ENCODE measurements at regions of chr9 and their contacts with region 1.

Region 1: DNA sequence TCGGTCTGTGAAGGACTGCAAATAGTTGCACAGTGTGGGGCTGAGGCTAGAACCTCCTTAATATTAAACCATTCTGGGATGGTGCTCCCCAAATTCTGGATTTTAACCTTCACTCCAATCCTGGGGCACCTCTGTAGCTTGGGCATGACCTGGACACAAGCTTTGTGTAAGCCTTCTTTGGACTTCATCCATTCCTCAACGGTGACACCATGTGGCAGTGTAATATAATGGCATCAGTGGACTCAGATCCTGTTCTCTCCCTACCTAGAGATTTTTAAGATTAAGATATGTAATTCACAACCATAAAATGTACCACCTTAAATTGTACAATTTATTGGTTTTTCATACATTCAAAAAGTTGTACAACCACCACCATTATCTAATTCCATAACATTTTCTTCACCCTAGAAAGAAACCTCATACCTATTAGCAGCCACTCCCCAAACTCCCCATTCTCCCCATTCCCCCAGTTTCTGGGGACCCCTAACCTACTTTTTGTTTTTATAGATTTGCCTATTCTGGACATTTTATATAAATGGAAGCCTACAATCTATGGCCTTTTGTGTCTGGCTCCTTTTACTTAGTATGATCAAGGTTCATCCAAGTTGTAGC is 4.8 kb upstream of the PLGRKT start:
- DNase-seq: peak; percentile 43
- H3K4me3 ChIP-seq: no peak overlapping the region
- H3K27ac ChIP-seq: no peak overlapping the region
- H3K4me1 ChIP-seq: no peaks in the 10 kb centered on the region
- H3K27me3 ChIP-seq: no peaks in the 10 kb centered on the region
- CTCF ChIP-seq: peak; percentile 46

Region 2: GRCh38 chr9:4750023-4750673 is 692.4 kb before region 1 on chr9:
- intact Hi-C with region 1: loop called (anchors 10 kb)
- DNase-seq: no peak
- H3K4me3 ChIP-seq: no peak overlapping the region
- H3K27ac ChIP-seq: no peak overlapping the region
- H3K4me1 ChIP-seq: no peaks in the 10 kb centered on the region
- H3K27me3 ChIP-seq: no peaks in the 10 kb centered on the region
- CTCF ChIP-seq: peak; percentile 51

Region 3: GRCh38 chr9:5786370-5787127 is 344.0 kb after region 1 on chr9:
- intact Hi-C with region 1: no loop called
- DNase-seq: no peak
- H3K4me3 ChIP-seq: no peak overlapping the region
- H3K27ac ChIP-seq: no peak overlapping the region
- H3K4me1 ChIP-seq: no peaks in the 10 kb centered on the region
- H3K27me3 ChIP-seq: no peaks in the 10 kb centered on the region
- CTCF ChIP-seq: no peak

Measured in colonic mucosa (tissue), 4 donors.